Activated B cell treated with CpG ODN at 0.5 μM for 24 hours (primary cell): ENCODE measurements at regions of chr5 and their contacts with region 1.

Region 1: GRCh38 chr5:87267574-87268125 is at the start of gene RASA1:
- DNase-seq: peak; percentile 78
- ATAC-seq: peak; percentile 70
- H3K4me3 Mint-ChIP-seq: peak within 1 kb of the TSS; percentile 99
- H3K27ac Mint-ChIP-seq: peak within 1 kb of the TSS; percentile 96
- H3K4me1 Mint-ChIP-seq: peaks cover 26% of the 10 kb centered on the region
- H3K27me3 Mint-ChIP-seq: no peaks in the 10 kb centered on the region
- CTCF ChIP-seq: no peak
- total RNA-seq, gene RASA1: 25.6 and 28.8 TPM in 2 replicates

Region 2: GRCh38 chr5:86617756-86618576 is 649.7 kb before region 1 on chr5 and contains the start of gene COX7C:
- CTCF ChIA-PET with region 1: no interaction called
- POLR2A ChIA-PET with region 1: no interaction called
- intact Hi-C with region 1: loop called (anchors 2 kb)
- DNase-seq: peak; percentile 77
- ATAC-seq: peak; percentile 96
- H3K4me3 Mint-ChIP-seq: peak within 1 kb of the TSS; percentile 100
- H3K27ac Mint-ChIP-seq: peak within 1 kb of the TSS; percentile 99
- H3K4me1 Mint-ChIP-seq: peaks cover 28% of the 10 kb centered on the region
- H3K27me3 Mint-ChIP-seq: peaks cover 7% of the 10 kb centered on the region
- CTCF ChIP-seq: no peak
- total RNA-seq, gene COX7C: 486 and 584 TPM in 2 replicates

Region 3: DNA sequence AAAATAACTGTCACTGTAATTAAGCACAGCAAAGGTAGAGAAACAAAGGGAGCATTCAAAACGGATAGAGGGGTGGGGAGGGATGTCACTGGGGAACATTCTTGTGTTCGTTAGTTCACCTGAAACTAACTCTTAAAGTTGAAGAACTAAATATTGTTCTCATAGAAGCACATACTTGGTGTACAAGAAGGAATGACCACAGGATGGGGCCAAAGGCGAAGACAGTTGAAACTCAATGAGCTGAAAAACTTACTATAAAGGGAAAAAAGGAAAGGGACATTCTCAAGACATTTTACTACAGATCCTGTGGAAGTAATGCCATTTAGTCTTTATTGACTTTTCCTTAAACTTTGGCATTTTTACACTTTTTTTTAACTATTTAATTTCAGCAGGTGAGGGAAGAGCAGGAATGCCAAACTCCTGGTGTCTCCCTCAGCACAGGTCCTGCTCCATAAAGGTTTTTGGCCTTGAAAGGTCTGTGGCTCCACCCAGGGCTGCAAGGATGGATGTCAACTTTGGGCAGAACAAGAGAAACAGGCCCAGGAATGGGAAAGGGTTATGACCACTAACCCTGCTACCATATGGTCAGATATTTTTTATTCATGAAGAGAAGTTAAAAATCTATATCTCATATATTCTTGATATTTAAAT is 197.6 kb before region 1 on chr5:
- CTCF ChIA-PET with region 1: interaction called, 3 read pairs
- POLR2A ChIA-PET with region 1: interaction called, 5 read pairs
- intact Hi-C with region 1: loop called (anchors 1 kb)
- DNase-seq: no peak
- ATAC-seq: peak; percentile 37
- H3K4me3 Mint-ChIP-seq: no peak overlapping the region
- H3K27ac Mint-ChIP-seq: no peak overlapping the region
- H3K4me1 Mint-ChIP-seq: peaks cover 26% of the 10 kb centered on the region
- H3K27me3 Mint-ChIP-seq: no peaks in the 10 kb centered on the region
- CTCF ChIP-seq: no peak

Region 4: GRCh38 chr5:87121304-87122150 is 146.1 kb before region 1 on chr5:
- CTCF ChIA-PET with region 1: no interaction called
- POLR2A ChIA-PET with region 1: interaction called, 4 read pairs
- intact Hi-C with region 1: loop called (anchors 1 kb)
- DNase-seq: no peak
- ATAC-seq: peak; percentile 82
- H3K4me3 Mint-ChIP-seq: peak overlapping the region; percentile 44
- H3K27ac Mint-ChIP-seq: peak overlapping the region; percentile 74
- H3K4me1 Mint-ChIP-seq: peaks cover 60% of the 10 kb centered on the region
- H3K27me3 Mint-ChIP-seq: no peaks in the 10 kb centered on the region
- CTCF ChIP-seq: no peak

Region 5: DNA sequence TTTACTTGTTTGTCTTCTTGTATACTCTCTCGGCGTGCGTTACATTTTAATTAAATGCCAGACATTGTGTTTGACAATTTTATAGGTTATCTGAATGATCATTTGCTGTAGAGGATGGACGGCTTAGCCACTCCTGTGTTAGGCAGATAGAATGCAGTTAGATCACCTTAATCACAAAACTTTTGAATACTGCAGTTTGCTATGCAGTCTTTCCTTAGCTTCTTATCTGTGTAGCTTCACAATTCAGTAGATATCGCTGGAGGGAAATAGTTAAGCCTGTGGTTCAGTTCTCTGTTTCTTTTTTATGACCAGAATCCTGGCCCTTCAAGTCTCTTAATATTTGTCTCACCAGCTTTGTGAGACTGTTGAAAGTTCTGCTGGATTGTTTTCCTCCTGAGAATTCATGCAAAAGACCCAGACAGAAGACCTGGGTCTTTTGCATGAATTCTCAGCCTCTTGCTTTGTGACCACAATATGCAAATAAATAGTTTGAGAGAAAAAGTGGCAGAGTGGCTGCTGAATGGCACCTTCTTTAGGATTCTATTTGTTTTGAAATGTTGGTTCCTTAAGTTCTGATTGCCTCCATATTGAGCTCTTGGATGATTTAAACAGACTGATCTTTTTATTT is 40.3 kb after region 1 on chr5:
- CTCF ChIA-PET with region 1: no interaction called
- POLR2A ChIA-PET with region 1: interaction called, 8 read pairs
- intact Hi-C with region 1: loop called (anchors 1 kb)
- DNase-seq: no peak
- ATAC-seq: peak; percentile 91
- H3K4me3 Mint-ChIP-seq: peak overlapping the region; percentile 5
- H3K27ac Mint-ChIP-seq: no peak overlapping the region
- H3K4me1 Mint-ChIP-seq: peaks cover 47% of the 10 kb centered on the region
- H3K27me3 Mint-ChIP-seq: no peaks in the 10 kb centered on the region
- CTCF ChIP-seq: no peak

Region 6: DNA sequence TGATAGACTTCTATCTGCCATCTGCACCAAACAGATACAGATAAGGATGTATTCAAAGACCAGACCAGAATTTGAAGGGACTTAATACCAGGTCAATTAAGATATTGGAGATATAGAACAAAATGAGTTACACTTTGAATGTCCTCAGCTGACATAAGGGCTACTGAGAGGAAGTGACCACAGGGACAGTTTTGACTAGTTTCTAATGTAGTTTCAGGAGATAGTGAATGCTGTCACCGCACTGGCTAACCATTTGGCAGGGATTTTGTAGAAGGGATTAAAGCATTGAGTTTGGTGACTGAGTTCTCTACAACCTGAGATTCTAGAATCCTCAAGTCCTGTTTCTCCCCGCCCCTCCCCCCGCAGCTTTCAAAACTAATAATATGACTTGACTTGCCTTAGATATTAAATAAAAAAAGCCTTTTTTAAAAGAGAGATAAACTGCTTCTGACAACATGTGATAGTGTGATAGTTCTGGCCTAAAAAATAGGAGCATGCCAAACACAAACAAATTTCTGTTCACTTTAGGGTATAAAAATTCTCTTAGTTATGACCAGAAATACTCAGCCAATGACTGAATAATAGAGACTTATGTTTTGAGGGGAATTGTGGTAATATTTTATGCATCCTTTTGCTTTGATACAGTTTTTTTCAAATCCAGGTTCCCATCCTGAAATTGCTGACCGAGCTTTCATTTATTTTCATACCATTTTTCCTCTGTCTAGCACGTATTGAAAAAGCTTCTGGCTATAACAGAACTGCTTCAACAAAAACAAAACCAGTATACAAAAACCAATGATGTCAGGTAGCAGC is 122.6 kb after region 1 on chr5:
- CTCF ChIA-PET with region 1: no interaction called
- POLR2A ChIA-PET with region 1: no interaction called
- intact Hi-C with region 1: no loop called
- DNase-seq: no peak
- ATAC-seq: no peak
- H3K4me3 Mint-ChIP-seq: no peak overlapping the region
- H3K27ac Mint-ChIP-seq: no peak overlapping the region
- H3K4me1 Mint-ChIP-seq: no peaks in the 10 kb centered on the region
- H3K27me3 Mint-ChIP-seq: no peaks in the 10 kb centered on the region
- CTCF ChIP-seq: no peak